Caco-2 (cell line): ENCODE measurements at regions of chr17 and their contacts with region 1.

Region 1: GRCh38 chr17:40938637-40939380 is 1.4 kb upstream of the KRT23 start:
- DNase-seq: peak in 1 of 2 experiments; percentile 39
- H3K4me3 ChIP-seq: no peak overlapping the region
- H3K4me3 Mint-ChIP-seq: no peak overlapping the region
- H3K27ac Mint-ChIP-seq: peak overlapping the region; percentile 77
- H3K4me1 ChIP-seq: peaks cover 40% of the 10 kb centered on the region
- H3K4me1 Mint-ChIP-seq: peaks cover 33% of the 10 kb centered on the region
- H3K27me3 ChIP-seq: no peaks in the 10 kb centered on the region
- H3K27me3 Mint-ChIP-seq: no peaks in the 10 kb centered on the region
- CTCF ChIP-seq: no peak

Region 2: GRCh38 chr17:40956401-40957254 is 17.8 kb after region 1 on chr17:
- CTCF ChIA-PET with region 1: no interaction called
- POLR2A ChIA-PET with region 1: interaction called, 3 read pairs
- intact Hi-C with region 1: loop called (anchors 1 kb)
- DNase-seq: peak; percentile 75 to 82
- H3K4me3 ChIP-seq: no peak overlapping the region
- H3K4me3 Mint-ChIP-seq: peak overlapping the region; percentile 62
- H3K27ac Mint-ChIP-seq: peak overlapping the region; percentile 89
- H3K4me1 ChIP-seq: peaks cover 79% of the 10 kb centered on the region
- H3K4me1 Mint-ChIP-seq: peaks cover 72% of the 10 kb centered on the region
- H3K27me3 ChIP-seq: no peaks in the 10 kb centered on the region
- H3K27me3 Mint-ChIP-seq: no peaks in the 10 kb centered on the region
- CTCF ChIP-seq: no peak